PC-9 (cell line): ENCODE measurements at regions of chr4 and their contacts with region 1.

Region 1: GRCh38 chr4:1346781-1347409 is at the start of gene UVSSA:
- DNase-seq: peak; percentile 96 to 100
- H3K4me3 ChIP-seq: peak within 1 kb of the TSS; percentile 93
- H3K27ac ChIP-seq: peak within 1 kb of the TSS; percentile 73
- H3K4me1 ChIP-seq: peaks cover 30% of the 10 kb centered on the region
- H3K27me3 ChIP-seq: no peaks in the 10 kb centered on the region
- CTCF ChIP-seq: no peak
- total RNA-seq, gene UVSSA: 24.3 and 38.7 TPM in 2 replicates

Region 2: GRCh38 chr4:242121-242848 is 1104.6 kb before region 1 on chr4:
- CTCF ChIA-PET with region 1: no interaction called
- POLR2A ChIA-PET with region 1: no interaction called
- intact Hi-C with region 1: loop called (anchors 5 kb)
- DNase-seq: peak; percentile 34 to 51
- H3K4me3 ChIP-seq: peak overlapping the region; percentile 40; the same call in 1 of the 2 replicates
- H3K27ac ChIP-seq: no peak overlapping the region
- H3K4me1 ChIP-seq: no peaks in the 10 kb centered on the region
- H3K27me3 ChIP-seq: no peaks in the 10 kb centered on the region
- CTCF ChIP-seq: peak; percentile 59

Region 3: DNA sequence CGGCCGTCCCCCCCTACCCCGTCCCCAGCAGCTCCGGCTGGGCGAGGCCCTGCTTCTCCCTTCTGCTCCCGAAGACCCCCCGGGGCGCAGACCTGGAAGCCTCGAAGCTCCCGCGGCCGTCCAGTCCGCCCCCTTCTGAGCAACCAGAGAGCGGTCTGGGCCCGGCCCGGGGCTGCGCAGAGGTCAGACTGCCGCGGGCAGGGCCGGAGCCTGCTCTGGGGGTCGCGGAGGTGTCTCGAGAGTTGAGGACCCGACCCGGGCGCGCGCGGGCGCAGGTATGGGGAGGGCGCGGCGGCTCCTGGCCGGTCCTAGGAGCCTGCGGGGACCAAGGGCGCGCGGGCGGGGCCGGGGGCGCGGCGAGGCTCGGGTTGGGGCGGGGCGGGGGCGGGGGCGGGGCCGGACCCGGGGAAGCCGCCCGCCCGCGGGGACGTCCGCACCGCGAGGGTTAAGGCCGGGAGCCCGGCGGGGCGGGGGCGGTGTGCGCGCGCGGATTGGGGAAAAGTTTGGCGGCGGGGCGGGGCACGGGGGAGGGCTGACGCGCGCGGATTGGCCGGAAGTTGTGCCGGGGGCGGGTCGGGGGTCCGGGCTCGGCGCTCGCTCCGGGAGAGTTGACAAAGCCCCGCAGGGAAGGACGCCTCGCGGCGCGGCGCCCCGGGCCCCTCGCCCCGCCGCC is 335.7 kb before region 1 on chr4 and contains the start of gene FGFRL1:
- CTCF ChIA-PET with region 1: no interaction called
- POLR2A ChIA-PET with region 1: interaction called, 3 read pairs
- intact Hi-C with region 1: loop called (anchors 5 kb)
- DNase-seq: peak; percentile 73 to 92
- H3K4me3 ChIP-seq: peak within 1 kb of the TSS; percentile 90
- H3K27ac ChIP-seq: peak within 1 kb of the TSS; percentile 55
- H3K4me1 ChIP-seq: peaks cover 5% of the 10 kb centered on the region; the same call in 1 of the 2 replicates
- H3K27me3 ChIP-seq: peaks cover 11% of the 10 kb centered on the region; the same call in 1 of the 2 replicates
- CTCF ChIP-seq: no peak
- total RNA-seq, gene FGFRL1: 59.5 and 61.6 TPM in 2 replicates

Region 4: GRCh38 chr4:1249148-1249730 is 97.7 kb before region 1 on chr4:
- CTCF ChIA-PET with region 1: no interaction called
- POLR2A ChIA-PET with region 1: interaction called, 11 read pairs
- intact Hi-C with region 1: loop called (anchors 1 kb)
- DNase-seq: peak; percentile 48 to 81
- H3K4me3 ChIP-seq: peak overlapping the region; percentile 83
- H3K27ac ChIP-seq: peak overlapping the region; percentile 56
- H3K4me1 ChIP-seq: peaks cover 24% of the 10 kb centered on the region
- H3K27me3 ChIP-seq: no peaks in the 10 kb centered on the region
- CTCF ChIP-seq: no peak

Region 5: DNA sequence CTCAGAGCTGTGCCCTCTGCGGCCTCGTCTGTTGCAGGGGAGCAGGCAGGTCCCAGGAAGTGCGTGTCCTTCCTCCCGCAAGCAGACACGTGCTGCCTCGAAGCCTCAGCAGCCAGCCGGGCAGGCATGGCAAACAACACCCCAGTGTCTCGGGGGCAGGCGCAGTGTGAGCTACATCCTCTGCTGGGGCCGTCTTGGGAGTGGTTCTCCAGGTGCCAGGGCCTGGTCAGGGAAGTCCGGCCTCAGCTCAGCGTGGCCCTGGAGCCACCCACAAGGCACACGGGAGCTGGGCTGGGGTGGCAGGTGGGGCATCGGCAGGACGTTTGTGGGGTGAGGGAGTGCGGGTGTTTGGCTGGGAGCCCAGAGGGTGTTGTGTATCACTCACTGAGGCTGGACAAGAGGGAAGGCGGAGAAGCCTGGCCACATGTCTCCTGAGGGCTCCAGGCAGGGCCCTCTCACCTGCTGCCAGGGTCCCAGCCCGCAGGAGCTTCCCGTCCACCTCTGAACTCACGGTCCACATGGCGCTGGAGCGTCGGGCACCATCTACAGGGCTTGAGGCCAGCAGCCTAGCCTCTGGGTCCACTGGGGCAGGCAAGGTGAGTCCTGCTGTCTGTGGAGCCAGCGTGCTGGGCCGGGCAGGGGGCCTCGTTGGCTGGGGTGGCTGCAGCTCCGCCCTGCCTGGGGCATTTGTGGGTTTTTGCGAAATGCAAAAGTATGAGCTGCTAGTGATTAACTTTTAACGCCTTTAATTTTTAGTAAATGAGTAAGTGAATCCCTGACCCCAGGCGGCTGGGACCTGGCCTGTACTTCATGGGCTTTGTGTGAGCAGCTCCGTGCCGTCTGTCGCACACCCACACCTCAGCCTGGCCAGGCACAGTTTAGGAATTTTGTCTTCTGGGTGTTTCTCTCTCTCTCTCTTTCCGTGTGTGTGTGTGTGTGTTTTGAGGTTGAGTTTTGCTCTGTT is 17.2 kb before region 1 on chr4:
- CTCF ChIA-PET with region 1: no interaction called
- POLR2A ChIA-PET with region 1: interaction called, 13 read pairs
- intact Hi-C with region 1: loop called (anchors 1 kb)
- DNase-seq: peak; percentile 92 to 97
- H3K4me3 ChIP-seq: no peak overlapping the region
- H3K27ac ChIP-seq: peak overlapping the region; percentile 85
- H3K4me1 ChIP-seq: peaks cover 32% of the 10 kb centered on the region
- H3K27me3 ChIP-seq: no peaks in the 10 kb centered on the region
- CTCF ChIP-seq: no peak

Region 6: GRCh38 chr4:1384675-1385372 is 37.9 kb after region 1 on chr4:
- CTCF ChIA-PET with region 1: no interaction called
- POLR2A ChIA-PET with region 1: no interaction called
- intact Hi-C with region 1: no loop called
- DNase-seq: no peak
- H3K4me3 ChIP-seq: no peak overlapping the region
- H3K27ac ChIP-seq: no peak overlapping the region
- H3K4me1 ChIP-seq: no peaks in the 10 kb centered on the region
- H3K27me3 ChIP-seq: no peaks in the 10 kb centered on the region
- CTCF ChIP-seq: no peak

Region 7: DNA sequence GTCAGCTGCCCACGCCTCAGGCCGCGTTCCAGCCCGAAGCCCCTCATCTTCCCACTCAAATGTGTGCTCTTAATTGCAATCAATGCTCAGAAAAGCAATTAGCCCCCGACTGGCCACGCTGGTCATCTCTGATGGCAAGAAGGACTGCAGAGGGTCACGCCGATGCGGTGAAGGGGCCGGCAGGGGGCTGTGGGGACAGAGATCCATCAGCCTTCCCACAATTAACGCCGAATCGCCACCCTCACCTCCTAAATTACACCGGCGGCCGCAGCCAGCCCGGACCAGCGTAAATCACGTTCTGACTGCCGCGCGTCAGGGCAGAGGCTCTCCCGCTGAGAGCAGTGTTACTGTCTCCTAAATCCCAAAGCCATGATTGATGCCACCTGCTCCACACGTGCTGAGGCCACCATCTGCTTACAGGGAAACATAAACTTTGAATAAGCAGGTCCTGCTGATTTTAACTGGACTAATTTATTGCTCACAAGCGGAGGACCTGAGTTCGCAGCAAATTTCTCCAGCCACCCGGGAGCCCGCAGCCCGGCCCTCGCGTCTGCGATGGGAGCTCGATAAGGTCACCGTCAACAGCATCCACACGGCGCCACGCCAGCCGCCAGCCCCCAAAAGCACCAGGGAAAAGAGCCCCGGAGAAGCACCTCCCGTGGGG is 186.6 kb after region 1 on chr4:
- CTCF ChIA-PET with region 1: no interaction called
- POLR2A ChIA-PET with region 1: no interaction called
- intact Hi-C with region 1: no loop called
- DNase-seq: no peak
- H3K4me3 ChIP-seq: no peak overlapping the region
- H3K27ac ChIP-seq: no peak overlapping the region
- H3K4me1 ChIP-seq: no peaks in the 10 kb centered on the region
- H3K27me3 ChIP-seq: peaks cover 72% of the 10 kb centered on the region
- CTCF ChIP-seq: no peak

Region 8: DNA sequence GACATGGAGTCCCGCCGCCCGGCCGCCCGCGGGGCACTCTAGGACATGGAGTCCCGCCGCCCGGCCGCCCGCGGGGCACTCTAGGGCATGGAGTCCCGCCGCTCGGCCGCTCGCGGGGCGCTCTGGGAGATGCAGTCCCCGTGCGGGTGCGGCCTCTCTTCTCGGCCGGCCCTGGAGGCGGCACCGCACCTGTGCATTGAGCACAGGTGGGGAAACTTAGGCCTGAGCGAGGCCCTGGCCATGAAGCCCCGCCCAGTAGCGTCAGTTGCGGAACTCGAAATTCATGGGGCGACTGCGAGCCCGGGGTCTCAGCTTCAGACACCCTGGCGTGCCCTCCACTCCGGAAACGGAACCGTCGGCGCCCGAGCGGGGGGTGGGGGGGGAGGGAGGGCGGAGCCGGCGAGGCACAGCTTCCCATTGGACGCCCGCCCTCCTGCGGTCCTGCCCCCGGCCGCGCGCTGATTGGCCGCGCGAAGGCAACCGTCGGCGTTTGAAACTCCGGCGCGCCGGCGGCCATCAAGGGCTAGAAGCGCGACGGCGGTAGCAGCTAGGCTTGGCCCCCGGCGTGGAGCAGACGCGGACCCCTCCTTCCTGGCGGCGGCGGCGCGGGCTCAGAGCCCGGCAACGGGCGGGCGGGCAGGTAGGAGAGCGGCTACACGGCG is 374.2 kb after region 1 on chr4 and contains the starts of genes TACC3 and TMEM129:
- CTCF ChIA-PET with region 1: no interaction called
- POLR2A ChIA-PET with region 1: no interaction called
- intact Hi-C with region 1: loop called (anchors 10 kb)
- DNase-seq: peak; percentile 95 to 97
- H3K4me3 ChIP-seq: peak within 1 kb of the TSS; percentile 93
- H3K27ac ChIP-seq: peak within 1 kb of the TSS; percentile 48
- H3K4me1 ChIP-seq: peaks cover 33% of the 10 kb centered on the region
- H3K27me3 ChIP-seq: no peaks in the 10 kb centered on the region
- CTCF ChIP-seq: no peak
- total RNA-seq, gene TACC3: 134 TPM in 2 replicates
- total RNA-seq, gene TMEM129: 41.2 and 52.5 TPM in 2 replicates